ENCODE measurements at regions of chr10 and their contacts with region 1.

Region 1: DNA sequence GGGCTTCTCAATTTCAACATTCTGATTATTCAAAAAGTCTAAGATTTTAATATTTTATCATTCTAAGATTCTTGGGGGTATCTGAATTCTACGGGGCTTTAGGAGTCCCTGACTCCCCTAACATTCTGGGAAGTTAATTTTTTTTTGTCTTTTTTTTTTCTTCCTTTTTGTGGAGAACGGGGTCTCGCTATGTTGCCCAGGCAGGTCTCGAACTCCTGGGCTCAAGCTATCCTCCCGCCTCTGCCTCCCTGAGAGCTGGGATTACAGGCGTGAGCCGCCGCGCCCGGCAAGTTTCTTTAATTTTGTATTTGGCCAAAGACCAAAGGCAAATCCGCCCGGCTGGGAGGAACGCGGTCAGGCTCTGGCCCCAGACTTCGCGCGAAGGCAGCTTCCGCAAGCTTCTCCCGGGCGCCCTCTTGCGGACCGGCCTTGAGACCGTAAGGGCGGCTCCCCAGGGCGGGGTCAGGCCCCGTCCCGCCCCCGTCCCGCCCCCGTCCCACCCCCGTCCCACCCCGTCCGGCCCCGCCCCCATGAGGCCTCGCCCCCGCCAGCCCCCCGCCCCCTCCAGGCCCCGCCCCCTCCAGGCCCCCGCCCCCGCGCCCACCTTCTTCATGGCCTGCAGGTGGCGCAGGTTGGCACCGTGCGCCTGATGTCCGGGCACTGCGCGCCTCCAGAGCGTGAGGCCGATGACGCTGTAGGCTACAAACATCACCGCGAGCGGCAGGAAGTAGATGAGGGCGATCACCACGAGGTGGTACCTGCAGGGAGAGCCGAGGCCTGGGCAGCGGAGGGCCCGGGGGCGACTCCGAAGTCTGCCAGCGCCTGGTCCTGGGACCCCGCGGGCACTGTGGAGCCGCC is 8.2 kb downstream of the TACR2 start:
- DNase-seq: peak; percentile 89
- ATAC-seq: peak; percentile 92
- H3K4me3 ChIP-seq: peak overlapping the region; percentile 51
- H3K27ac ChIP-seq: no peak overlapping the region
- H3K4me1 ChIP-seq: peaks cover 6% of the 10 kb centered on the region
- H3K27me3 ChIP-seq: no peaks in the 10 kb centered on the region; the same call in 1 of the 2 replicates
- CTCF ChIP-seq: peak; percentile 60
- POLR2A ChIP-seq: no peak
- RAD21 ChIP-seq: peak; percentile 43; the same call in 1 of the 2 replicates

Region 2: GRCh38 chr10:68784476-68784875 is 624.1 kb before region 1 on chr10:
- CTCF ChIA-PET with region 1: no interaction called
- POLR2A ChIA-PET with region 1: no interaction called
- dilution Hi-C with region 1: no loop called
- in situ Hi-C with region 1: no loop called
- intact Hi-C with region 1: loop called (anchors 10 kb)
- DNase-seq: peak; percentile 8
- ATAC-seq: no peak; the same call in 1 of the 2 replicates
- H3K4me3 ChIP-seq: no peak overlapping the region
- H3K27ac ChIP-seq: no peak overlapping the region
- H3K4me1 ChIP-seq: no peaks in the 10 kb centered on the region
- H3K27me3 ChIP-seq: no peaks in the 10 kb centered on the region
- CTCF ChIP-seq: no peak
- POLR2A ChIP-seq: no peak
- RAD21 ChIP-seq: no peak

Region 3: DNA sequence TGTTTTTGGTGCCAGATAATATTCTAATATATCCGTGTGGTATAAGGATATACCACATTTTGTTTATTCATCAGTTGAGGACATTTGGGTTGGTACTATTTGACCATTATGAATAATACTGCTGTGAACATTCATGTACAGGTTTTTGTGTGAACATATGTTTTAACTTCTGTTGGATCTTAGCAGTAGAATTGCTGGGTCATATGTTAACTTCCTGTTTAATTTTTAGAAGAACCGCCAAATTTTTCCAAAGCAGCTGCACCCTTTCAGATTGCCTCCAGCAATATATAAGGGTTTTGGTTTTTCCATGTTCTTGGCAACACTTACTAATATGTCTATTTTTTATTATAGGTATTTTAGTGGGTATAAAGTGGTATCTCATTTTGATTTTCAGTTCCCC is 261.8 kb before region 1 on chr10:
- CTCF ChIA-PET with region 1: no interaction called
- POLR2A ChIA-PET with region 1: no interaction called
- dilution Hi-C with region 1: no loop called
- in situ Hi-C with region 1: no loop called
- intact Hi-C with region 1: no loop called
- DNase-seq: peak; percentile 3
- ATAC-seq: no peak
- H3K4me3 ChIP-seq: no peak overlapping the region
- H3K27ac ChIP-seq: no peak overlapping the region
- H3K4me1 ChIP-seq: no peaks in the 10 kb centered on the region
- H3K27me3 ChIP-seq: no peaks in the 10 kb centered on the region
- CTCF ChIP-seq: no peak
- POLR2A ChIP-seq: no peak
- RAD21 ChIP-seq: no peak

Region 4: GRCh38 chr10:69506834-69507721 is 98.5 kb after region 1 on chr10:
- CTCF ChIA-PET with region 1: interaction called, 5 read pairs
- POLR2A ChIA-PET with region 1: no interaction called
- dilution Hi-C with region 1: no loop called
- in situ Hi-C with region 1: no loop called
- intact Hi-C with region 1: loop called (anchors 1 kb)
- DNase-seq: no peak
- ATAC-seq: no peak
- H3K4me3 ChIP-seq: no peak overlapping the region
- H3K27ac ChIP-seq: no peak overlapping the region
- H3K4me1 ChIP-seq: no peaks in the 10 kb centered on the region
- H3K27me3 ChIP-seq: peaks cover 40% of the 10 kb centered on the region
- CTCF ChIP-seq: no peak
- POLR2A ChIP-seq: no peak
- RAD21 ChIP-seq: no peak